IMR-90 (cell line): ENCODE measurements at regions of chr1 and their contacts with region 1.

Region 1: DNA sequence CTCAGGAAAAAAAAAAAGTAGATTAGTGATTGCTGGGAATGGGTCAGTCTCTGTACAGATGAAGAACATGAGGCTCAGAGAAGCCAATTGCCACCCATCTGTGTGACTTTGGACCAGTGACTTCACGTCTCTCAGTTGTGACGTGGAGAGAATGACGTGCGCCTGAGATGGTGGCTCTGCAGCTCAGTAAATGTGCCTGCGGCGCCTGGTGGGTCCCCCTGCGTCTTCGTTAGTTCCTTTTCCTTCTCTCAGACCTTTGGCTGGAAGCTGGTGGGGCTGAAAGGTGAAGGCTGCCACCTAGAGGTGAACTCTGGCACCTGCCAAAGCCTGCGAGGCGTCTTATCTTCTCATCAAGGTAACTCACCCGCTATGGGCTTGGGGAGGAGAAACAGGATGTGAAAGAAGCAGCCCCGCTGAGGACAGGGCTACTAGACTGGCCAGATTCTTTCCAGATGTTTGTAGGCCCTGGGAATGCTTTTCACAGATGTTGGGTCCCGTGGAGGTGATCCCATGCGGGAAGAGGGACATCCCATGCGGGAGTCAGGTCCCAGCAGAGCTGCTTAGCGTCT is 8.7 kb upstream of the E2F2 start:
- DNase-seq: peak; percentile 88
- ATAC-seq: peak; percentile 89
- H3K4me3 ChIP-seq: no peak overlapping the region
- H3K27ac ChIP-seq: no peak overlapping the region
- H3K4me1 ChIP-seq: peaks cover 4% of the 10 kb centered on the region; the same call in 1 of the 2 replicates
- H3K27me3 ChIP-seq: no peaks in the 10 kb centered on the region
- CTCF ChIP-seq: peak; percentile 95
- POLR2A ChIP-seq: no peak
- RAD21 ChIP-seq: peak; percentile 92

Region 2: GRCh38 chr1:23098463-23099170 is 441.2 kb before region 1 on chr1:
- CTCF ChIA-PET with region 1: no interaction called
- POLR2A ChIA-PET with region 1: no interaction called
- dilution Hi-C with region 1: no loop called
- in situ Hi-C with region 1: no loop called
- intact Hi-C with region 1: loop called (anchors 5 kb)
- DNase-seq: peak; percentile 77
- ATAC-seq: peak; percentile 59
- H3K4me3 ChIP-seq: no peak overlapping the region
- H3K27ac ChIP-seq: no peak overlapping the region
- H3K4me1 ChIP-seq: peaks cover 18% of the 10 kb centered on the region
- H3K27me3 ChIP-seq: no peaks in the 10 kb centered on the region
- CTCF ChIP-seq: peak; percentile 98
- POLR2A ChIP-seq: peak; percentile 54
- RAD21 ChIP-seq: peak; percentile 98

Region 3: GRCh38 chr1:23126801-23127200 is 413.0 kb before region 1 on chr1:
- CTCF ChIA-PET with region 1: no interaction called
- POLR2A ChIA-PET with region 1: no interaction called
- dilution Hi-C with region 1: no loop called
- in situ Hi-C with region 1: no loop called
- intact Hi-C with region 1: no loop called
- DNase-seq: peak; percentile 87
- ATAC-seq: peak; percentile 84
- H3K4me3 ChIP-seq: no peak overlapping the region
- H3K27ac ChIP-seq: no peak overlapping the region
- H3K4me1 ChIP-seq: peaks cover 18% of the 10 kb centered on the region
- H3K27me3 ChIP-seq: no peaks in the 10 kb centered on the region
- CTCF ChIP-seq: no peak
- POLR2A ChIP-seq: no peak
- RAD21 ChIP-seq: no peak

Region 4: GRCh38 chr1:23422241-23423030 is 117.3 kb before region 1 on chr1:
- CTCF ChIA-PET with region 1: interaction called, 5 read pairs
- POLR2A ChIA-PET with region 1: no interaction called
- dilution Hi-C with region 1: no loop called
- in situ Hi-C with region 1: no loop called
- intact Hi-C with region 1: loop called (anchors 5 kb)
- DNase-seq: peak; percentile 82
- ATAC-seq: peak; percentile 86
- H3K4me3 ChIP-seq: no peak overlapping the region
- H3K27ac ChIP-seq: peak overlapping the region; percentile 76
- H3K4me1 ChIP-seq: peaks cover 16% of the 10 kb centered on the region
- H3K27me3 ChIP-seq: no peaks in the 10 kb centered on the region
- CTCF ChIP-seq: no peak
- POLR2A ChIP-seq: no peak
- RAD21 ChIP-seq: no peak

Region 5: DNA sequence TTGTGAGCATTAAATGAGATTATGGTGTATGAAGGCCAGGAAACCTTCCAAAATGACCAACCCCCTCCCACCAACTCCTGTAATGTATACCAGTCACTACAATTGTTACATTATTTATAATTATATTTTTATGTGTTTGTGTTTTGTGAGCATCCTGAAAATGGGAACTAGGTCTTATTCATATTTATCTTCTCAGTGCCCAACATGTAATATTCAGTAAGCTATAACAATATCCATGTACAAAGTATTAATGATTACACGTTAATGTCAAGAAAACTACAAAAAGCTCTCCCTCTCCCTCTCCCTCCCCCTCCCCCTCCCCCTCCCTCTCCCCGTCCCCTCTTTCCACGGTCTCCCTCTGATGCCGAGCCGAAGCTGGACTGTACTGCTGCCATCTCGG is 36.8 kb before region 1 on chr1:
- CTCF ChIA-PET with region 1: interaction called, 21 read pairs
- POLR2A ChIA-PET with region 1: no interaction called
- dilution Hi-C with region 1: no loop called
- in situ Hi-C with region 1: no loop called
- intact Hi-C with region 1: no loop called
- DNase-seq: no peak
- ATAC-seq: no peak
- H3K4me3 ChIP-seq: no peak overlapping the region
- H3K27ac ChIP-seq: no peak overlapping the region
- H3K4me1 ChIP-seq: no peaks in the 10 kb centered on the region
- H3K27me3 ChIP-seq: no peaks in the 10 kb centered on the region
- CTCF ChIP-seq: no peak
- POLR2A ChIP-seq: no peak
- RAD21 ChIP-seq: no peak

Region 6: GRCh38 chr1:23751050-23751814 is 211.4 kb after region 1 on chr1:
- CTCF ChIA-PET with region 1: no interaction called
- POLR2A ChIA-PET with region 1: no interaction called
- dilution Hi-C with region 1: no loop called
- in situ Hi-C with region 1: loop called (anchors 10 kb)
- intact Hi-C with region 1: loop called (anchors 2 kb)
- DNase-seq: peak; percentile 57
- ATAC-seq: peak; percentile 85
- H3K4me3 ChIP-seq: no peak overlapping the region
- H3K27ac ChIP-seq: no peak overlapping the region
- H3K4me1 ChIP-seq: no peaks in the 10 kb centered on the region; the same call in 1 of the 2 replicates
- H3K27me3 ChIP-seq: no peaks in the 10 kb centered on the region
- CTCF ChIP-seq: peak; percentile 58
- POLR2A ChIP-seq: no peak
- RAD21 ChIP-seq: peak; percentile 69

Region 7: GRCh38 chr1:23809751-23810171 is 270.0 kb after region 1 on chr1:
- CTCF ChIA-PET with region 1: no interaction called
- POLR2A ChIA-PET with region 1: no interaction called
- dilution Hi-C with region 1: no loop called
- in situ Hi-C with region 1: no loop called
- intact Hi-C with region 1: no loop called
- DNase-seq: peak; percentile 51
- ATAC-seq: peak; percentile 91
- H3K4me3 ChIP-seq: no peak overlapping the region
- H3K27ac ChIP-seq: no peak overlapping the region
- H3K4me1 ChIP-seq: no peaks in the 10 kb centered on the region
- H3K27me3 ChIP-seq: no peaks in the 10 kb centered on the region
- CTCF ChIP-seq: peak; percentile 75
- POLR2A ChIP-seq: no peak
- RAD21 ChIP-seq: peak; percentile 74